Cardiac septum (tissue), 1 donor: ENCODE measurements at regions of chr2 and their contacts with region 1.

Region 1: GRCh38 chr2:24382363-24383073 is 22.2 kb upstream of the ITSN2 start:
- DNase-seq: no peak

Region 2: GRCh38 chr2:24228470-24228869 is 154.0 kb before region 1 on chr2:
- intact Hi-C with region 1: loop called (anchors 2 kb)
- DNase-seq: no peak

Region 3: DNA sequence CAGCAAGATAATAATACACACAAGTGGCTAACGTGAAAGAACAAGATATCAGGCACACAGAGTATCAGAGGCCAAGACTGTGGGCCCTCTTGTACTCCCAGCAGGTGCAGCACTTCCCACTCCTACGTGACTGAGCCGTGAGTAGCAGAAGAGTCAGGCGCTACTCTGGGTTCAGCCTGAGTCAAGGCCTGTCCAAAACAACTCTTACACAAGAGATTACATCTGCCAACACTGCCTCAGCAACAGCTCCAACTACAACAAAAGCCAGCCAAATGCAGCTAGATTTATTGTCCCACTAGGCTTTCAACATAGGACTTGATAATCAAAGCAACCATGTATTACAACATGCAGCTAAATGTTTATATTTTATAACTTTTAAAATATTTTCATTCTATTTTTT is 78.4 kb before region 1 on chr2:
- intact Hi-C with region 1: loop called (anchors 5 kb)
- DNase-seq: peak; percentile 79

Region 4: DNA sequence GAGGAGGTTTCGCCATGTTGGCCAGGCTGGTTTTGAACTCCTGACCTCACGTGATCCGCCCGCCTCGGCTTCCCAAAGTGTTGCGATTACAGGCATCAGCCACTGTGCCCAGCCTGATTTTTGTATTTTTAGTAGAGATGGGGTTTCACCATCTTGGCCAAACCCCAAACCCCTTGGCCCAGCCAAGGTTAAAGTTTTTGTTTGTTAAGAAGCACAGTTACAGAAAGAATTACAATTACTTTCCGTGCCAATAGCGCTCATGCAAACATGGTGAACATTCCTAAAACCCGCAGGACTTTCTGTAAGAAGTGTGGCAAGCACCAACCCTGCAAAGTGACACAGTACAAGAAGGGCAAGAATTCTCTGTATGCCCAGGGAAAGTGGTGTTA is 48.3 kb before region 1 on chr2:
- intact Hi-C with region 1: no loop called
- DNase-seq: no peak